ENCODE measurements at regions of chr15 and their contacts with region 1.

Region 1: DNA sequence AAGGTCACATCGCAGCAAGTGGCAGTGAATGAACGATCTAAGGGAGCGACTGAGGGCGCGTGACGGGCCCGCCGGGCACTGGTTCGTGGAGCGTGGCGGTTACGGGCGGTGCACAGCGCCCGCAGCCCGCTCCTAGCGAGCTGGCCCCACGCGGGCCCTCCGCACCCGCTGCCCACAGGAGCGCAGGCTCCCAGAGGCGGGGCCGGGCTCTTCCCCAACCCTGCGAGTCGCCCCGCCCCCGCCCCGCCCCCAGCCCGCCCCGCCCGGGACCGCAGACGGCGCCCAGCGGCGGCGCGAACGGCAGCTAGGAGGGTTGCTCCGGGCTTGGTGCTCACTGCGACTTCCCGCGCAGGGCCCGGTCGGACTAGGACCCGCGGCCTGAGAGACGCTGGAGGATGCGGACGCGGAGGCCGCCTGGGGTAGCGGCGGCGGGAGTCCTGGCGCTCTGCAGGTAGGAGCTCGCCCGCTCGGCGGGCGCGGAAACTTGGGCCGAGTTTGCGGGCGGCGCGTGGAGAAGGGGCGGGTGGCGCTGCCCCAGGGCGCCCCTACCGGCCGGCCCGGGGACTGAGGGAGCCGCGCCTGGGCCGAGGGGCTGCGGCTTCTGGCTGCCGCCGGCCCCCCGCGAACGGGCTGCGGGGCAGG is at the start of gene C15orf39:
- DNase-seq: peak; percentile 66 to 88 (median 84)
- ATAC-seq: peak; percentile 78
- H3K4me3 ChIP-seq: peak within 1 kb of the TSS; percentile 84
- H3K4me3 Mint-ChIP-seq: peak within 1 kb of the TSS; percentile 89 to 98 (median 94)
- H3K27ac ChIP-seq: peak within 1 kb of the TSS; percentile 92
- H3K27ac Mint-ChIP-seq: peak within 1 kb of the TSS; percentile 69 to 95 (median 88)
- H3K4me1 ChIP-seq: peaks cover 26 to 27% of the 10 kb centered on the region in 2 donors
- H3K4me1 Mint-ChIP-seq: peaks cover 19 to 68% (median 39%) of the 10 kb centered on the region in 7 donors
- H3K27me3 ChIP-seq: no peaks in the 10 kb centered on the region
- H3K27me3 Mint-ChIP-seq: no peaks in the 10 kb centered on the region
- total RNA-seq, gene C15orf39: 30.9 to 124 (median 50.5) TPM

Region 2: GRCh38 chr15:74540761-74541493 is 660.8 kb before region 1 on chr15 and contains the start of gene ARID3B:
- CTCF ChIA-PET with region 1: no interaction called
- POLR2A ChIA-PET with region 1: no interaction called
- intact Hi-C with region 1: loop called (anchors 5 kb)
- DNase-seq: peak; percentile 72 to 95 (median 90)
- ATAC-seq: peak; percentile 94
- H3K4me3 ChIP-seq: peak within 1 kb of the TSS; percentile 98
- H3K4me3 Mint-ChIP-seq: peak within 1 kb of the TSS; percentile 90 to 99 (median 98)
- H3K27ac ChIP-seq: peak within 1 kb of the TSS; percentile 87
- H3K27ac Mint-ChIP-seq: peak within 1 kb of the TSS; percentile 84 to 99 (median 94)
- H3K4me1 ChIP-seq: peaks cover 18 to 34% of the 10 kb centered on the region in 2 donors
- H3K4me1 Mint-ChIP-seq: peaks cover 46 to 64% (median 55%) of the 10 kb centered on the region in 7 donors
- H3K27me3 ChIP-seq: no peaks in the 10 kb centered on the region
- H3K27me3 Mint-ChIP-seq: no peaks in the 10 kb centered on the region
- total RNA-seq, gene ARID3B: 29.5 to 45.4 (median 36.8) TPM

Region 3: GRCh38 chr15:74956648-74957300 is 245.0 kb before region 1 on chr15 and contains the start of gene RPP25:
- CTCF ChIA-PET with region 1: interaction called, 5 read pairs
- POLR2A ChIA-PET with region 1: no interaction called
- intact Hi-C with region 1: loop called (anchors 1 to 2 kb)
- DNase-seq: peak; percentile 32 to 82 (median 49)
- ATAC-seq: peak; percentile 92
- H3K4me3 ChIP-seq: peak within 1 kb of the TSS; percentile 67
- H3K4me3 Mint-ChIP-seq: peak within 1 kb of the TSS; percentile 68 to 83 (median 81)
- H3K27ac ChIP-seq: peak within 1 kb of the TSS; percentile 1
- H3K27ac Mint-ChIP-seq: no peak within 1 kb of the TSS
- H3K4me1 ChIP-seq: peaks cover 17 to 23% of the 10 kb centered on the region in 2 donors
- H3K4me1 Mint-ChIP-seq: peaks cover 14 to 40% (median 31%) of the 10 kb centered on the region in 7 donors
- H3K27me3 ChIP-seq: peaks cover 9 to 10% of the 10 kb centered on the region in 2 donors
- H3K27me3 Mint-ChIP-seq: peaks cover 25 to 47% (median 27%) of the 10 kb centered on the region in 5 donors
- total RNA-seq, gene RPP25: 0.95 to 5.8 (median 3.3) TPM

Region 4: DNA sequence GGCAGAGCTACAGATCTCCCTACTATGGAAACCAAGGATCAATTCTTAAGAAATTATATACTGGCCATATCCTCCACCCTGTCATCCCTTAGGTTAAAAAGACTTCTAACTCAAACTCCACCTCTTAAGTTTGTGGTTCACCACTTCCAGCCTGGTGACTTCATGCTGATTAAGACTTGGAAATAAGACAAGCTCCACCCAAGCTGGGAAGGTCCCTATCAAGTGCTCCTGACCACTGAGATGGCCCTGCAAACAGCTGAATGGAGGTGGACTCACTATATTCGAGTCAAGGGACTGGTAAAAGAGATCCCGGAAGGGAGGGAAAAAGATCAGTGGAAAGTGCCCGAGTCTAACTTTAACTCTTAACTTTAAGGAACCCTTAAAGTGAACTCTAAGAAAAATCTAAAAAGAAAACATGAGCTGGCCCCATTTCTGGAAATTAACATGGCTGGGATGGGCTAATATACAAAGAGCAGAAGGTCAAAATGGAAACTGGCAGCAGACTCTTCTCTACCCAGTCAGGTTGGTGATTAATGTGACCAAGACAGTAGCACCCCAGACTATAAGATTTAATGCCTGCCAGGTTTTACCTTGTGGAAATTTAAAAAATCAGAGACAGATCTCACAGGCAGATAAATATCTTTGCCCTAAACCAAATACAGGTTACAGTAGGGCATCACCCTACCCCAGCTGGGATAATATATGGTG is 134.5 kb before region 1 on chr15:
- CTCF ChIA-PET with region 1: no interaction called
- POLR2A ChIA-PET with region 1: no interaction called
- intact Hi-C with region 1: loop called in 1 of 2 experiments (anchors 1 kb)
- DNase-seq: peak in 2 of 9 donors; percentile 11 to 67
- ATAC-seq: peak; percentile 64
- H3K4me3 ChIP-seq: no peak overlapping the region
- H3K4me3 Mint-ChIP-seq: peak overlapping the region in 7 of 10 donors; percentile 0 to 85 (median 36)
- H3K27ac ChIP-seq: no peak overlapping the region
- H3K27ac Mint-ChIP-seq: peak overlapping the region in 2 of 9 donors; percentile 9 to 97
- H3K4me1 ChIP-seq: peaks cover 12 to 24% of the 10 kb centered on the region in 2 donors
- H3K4me1 Mint-ChIP-seq: peaks cover 19 to 88% (median 26%) of the 10 kb centered on the region in 7 donors
- H3K27me3 ChIP-seq: no peaks in the 10 kb centered on the region
- H3K27me3 Mint-ChIP-seq: peaks cover 0 to 10% (median 4%) of the 10 kb centered on the region in 5 donors

Region 5: GRCh38 chr15:75171408-75171807 is 30.3 kb before region 1 on chr15:
- CTCF ChIA-PET with region 1: no interaction called
- POLR2A ChIA-PET with region 1: no interaction called
- intact Hi-C with region 1: no loop called
- DNase-seq: peak in 1 of 9 donors; percentile 52
- ATAC-seq: peak; percentile 24
- H3K4me3 ChIP-seq: no peak overlapping the region
- H3K4me3 Mint-ChIP-seq: peak overlapping the region in 1 of 10 donors; percentile 74
- H3K27ac ChIP-seq: no peak overlapping the region
- H3K27ac Mint-ChIP-seq: peak overlapping the region in 1 of 9 donors; percentile 51
- H3K4me1 ChIP-seq: no peaks in the 10 kb centered on the region
- H3K4me1 Mint-ChIP-seq: peaks cover 0 to 51% (median 0%) of the 10 kb centered on the region in 7 donors
- H3K27me3 ChIP-seq: no peaks in the 10 kb centered on the region
- H3K27me3 Mint-ChIP-seq: peaks cover 0 to under 1% (median 0%) of the 10 kb centered on the region in 5 donors

Region 6: GRCh38 chr15:75367913-75368688 is 166.4 kb after region 1 on chr15 and contains the start of gene MAN2C1:
- CTCF ChIA-PET with region 1: no interaction called
- POLR2A ChIA-PET with region 1: interaction called, 4 read pairs
- intact Hi-C with region 1: loop called in 1 of 2 experiments (anchors 5 kb)
- DNase-seq: peak; percentile 80 to 96 (median 87)
- ATAC-seq: peak; percentile 98
- H3K4me3 ChIP-seq: peak within 1 kb of the TSS; percentile 75
- H3K4me3 Mint-ChIP-seq: peak within 1 kb of the TSS; percentile 88 to 94 (median 92)
- H3K27ac ChIP-seq: peak within 1 kb of the TSS; percentile 93
- H3K27ac Mint-ChIP-seq: peak within 1 kb of the TSS; percentile 90 to 97 (median 94)
- H3K4me1 ChIP-seq: peaks cover 11 to 15% of the 10 kb centered on the region in 2 donors
- H3K4me1 Mint-ChIP-seq: peaks cover 8 to 28% (median 24%) of the 10 kb centered on the region in 7 donors
- H3K27me3 ChIP-seq: no peaks in the 10 kb centered on the region
- H3K27me3 Mint-ChIP-seq: no peaks in the 10 kb centered on the region
- total RNA-seq, gene MAN2C1: 298 to 557 (median 451) TPM

Region 7: DNA sequence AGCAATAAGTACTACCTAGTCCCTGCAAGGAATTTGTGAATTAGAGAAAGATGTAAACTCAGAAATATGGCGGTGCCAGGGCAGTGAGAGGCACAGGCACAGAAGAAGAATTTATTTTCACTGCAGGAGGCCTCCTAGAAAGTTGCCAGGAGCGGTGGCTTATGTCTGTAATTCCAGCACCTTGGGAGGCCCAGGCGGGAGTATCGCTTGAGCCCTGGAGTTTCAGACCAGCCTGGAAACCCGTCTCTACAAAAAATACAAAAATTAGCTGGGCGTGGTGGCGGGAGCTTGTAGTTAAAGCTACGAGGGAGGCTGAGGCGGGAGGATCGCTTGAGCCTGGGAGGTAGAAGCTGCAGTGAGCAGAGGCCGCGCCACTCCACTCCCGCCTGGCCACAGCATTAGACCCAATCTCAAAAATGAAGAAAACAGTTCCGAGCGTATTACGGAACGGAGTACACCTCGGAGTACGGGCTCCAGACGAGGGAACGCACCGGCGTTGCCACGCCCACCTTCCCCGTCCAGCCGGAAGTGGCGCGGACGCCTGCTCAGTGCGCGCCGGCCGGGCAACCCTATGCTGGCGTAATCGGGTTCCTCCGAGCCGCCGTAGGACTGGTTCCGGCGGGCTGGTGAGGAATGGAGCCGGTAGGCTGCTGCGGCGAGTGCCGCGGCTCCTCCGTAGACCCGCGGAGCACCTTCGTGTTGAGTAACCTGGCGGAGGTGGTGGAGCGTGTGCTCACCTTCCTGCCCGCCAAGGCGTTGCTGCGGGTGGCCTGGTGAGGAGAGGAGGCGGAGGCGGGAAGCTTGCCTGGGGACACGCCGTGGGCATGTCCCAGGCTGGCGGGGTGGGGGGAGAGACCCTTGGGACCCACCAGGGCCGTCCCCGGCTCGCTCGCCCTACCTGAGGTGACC is 701.9 kb after region 1 on chr15 and contains the start of gene FBXO22:
- CTCF ChIA-PET with region 1: interaction called, 4 read pairs
- POLR2A ChIA-PET with region 1: no interaction called
- intact Hi-C with region 1: loop called in 1 of 2 experiments (anchors 5 kb)
- DNase-seq: peak; percentile 79 to 92 (median 85)
- ATAC-seq: peak; percentile 98
- H3K4me3 ChIP-seq: peak within 1 kb of the TSS; percentile 91
- H3K4me3 Mint-ChIP-seq: peak within 1 kb of the TSS; percentile 96 to 99 (median 98)
- H3K27ac ChIP-seq: peak within 1 kb of the TSS; percentile 79
- H3K27ac Mint-ChIP-seq: peak within 1 kb of the TSS; percentile 91 to 97 (median 94)
- H3K4me1 ChIP-seq: peaks cover 0 to 12% of the 10 kb centered on the region in 2 donors
- H3K4me1 Mint-ChIP-seq: peaks cover 15 to 70% (median 51%) of the 10 kb centered on the region in 7 donors
- H3K27me3 ChIP-seq: no peaks in the 10 kb centered on the region
- H3K27me3 Mint-ChIP-seq: no peaks in the 10 kb centered on the region
- total RNA-seq, gene FBXO22: 9.7 to 34.5 (median 25.5) TPM

Measured in naive thymus-derived CD4-positive, alpha-beta T cell (primary cell).